K562 (cell line): ENCODE measurements at regions of chr7 and their contacts with region 1.

Region 1: GRCh38 chr7:12490117-12490688 is 80.3 kb upstream of the SCIN start:
- DNase-seq: peak; percentile 27 to 42 (median 30)
- ATAC-seq: peak; percentile 77
- H3K4me3 ChIP-seq: no peak overlapping the region
- H3K27ac ChIP-seq: no peak overlapping the region
- H3K4me1 ChIP-seq: 0 out of 5 replicates have a peak, but pooled peaks cover 0 to 3% of the 10 kb centered on the region in 2 experiments
- H3K27me3 ChIP-seq: no peaks in the 10 kb centered on the region
- CTCF ChIP-seq: peak; percentile 30 to 73 (median 57); a peak in 4 of 6 replicates
- EP300 ChIP-seq: no peak
- POLR2A ChIP-seq: no peak
- RAD21 ChIP-seq: peak; percentile 80 to 90

Region 2: DNA sequence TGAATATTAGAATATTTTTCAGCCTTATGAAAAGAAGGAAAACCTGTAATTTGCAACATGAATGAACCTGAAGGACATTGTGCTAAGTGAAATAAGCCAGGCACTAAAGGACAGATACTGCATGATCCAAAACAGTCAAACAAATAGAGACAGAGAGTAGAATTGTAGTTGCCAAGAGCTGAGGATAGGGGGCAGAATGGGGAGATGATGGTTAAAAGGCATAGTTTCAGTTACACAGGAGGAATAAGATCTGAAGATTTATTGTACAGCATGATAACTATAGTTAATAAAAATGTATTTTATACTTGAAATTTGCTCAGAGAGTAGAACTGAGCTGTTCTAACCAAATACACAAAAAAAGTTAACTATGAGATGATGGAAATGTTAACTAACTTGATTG is 428.1 kb before region 1 on chr7:
- CTCF ChIA-PET with region 1: no interaction called
- POLR2A ChIA-PET with region 1: no interaction called
- in situ Hi-C with region 1: loop called (anchors 5 kb)
- intact Hi-C with region 1: no loop called
- DNase-seq: peak in 2 of 4 experiments; percentile 3 to 5
- ATAC-seq: peak; percentile 51; the same call in 1 of the 3 replicates
- H3K4me3 ChIP-seq: no peak overlapping the region
- H3K27ac ChIP-seq: no peak overlapping the region
- H3K4me1 ChIP-seq: no peaks in the 10 kb centered on the region
- H3K27me3 ChIP-seq: no peaks in the 10 kb centered on the region
- CTCF ChIP-seq: peak in 2 of 3 experiments; percentile 12 to 34; a peak in 2 of 6 replicates
- EP300 ChIP-seq: no peak
- POLR2A ChIP-seq: no peak
- RAD21 ChIP-seq: no peak; a peak in 1 of 4 replicates

Region 3: DNA sequence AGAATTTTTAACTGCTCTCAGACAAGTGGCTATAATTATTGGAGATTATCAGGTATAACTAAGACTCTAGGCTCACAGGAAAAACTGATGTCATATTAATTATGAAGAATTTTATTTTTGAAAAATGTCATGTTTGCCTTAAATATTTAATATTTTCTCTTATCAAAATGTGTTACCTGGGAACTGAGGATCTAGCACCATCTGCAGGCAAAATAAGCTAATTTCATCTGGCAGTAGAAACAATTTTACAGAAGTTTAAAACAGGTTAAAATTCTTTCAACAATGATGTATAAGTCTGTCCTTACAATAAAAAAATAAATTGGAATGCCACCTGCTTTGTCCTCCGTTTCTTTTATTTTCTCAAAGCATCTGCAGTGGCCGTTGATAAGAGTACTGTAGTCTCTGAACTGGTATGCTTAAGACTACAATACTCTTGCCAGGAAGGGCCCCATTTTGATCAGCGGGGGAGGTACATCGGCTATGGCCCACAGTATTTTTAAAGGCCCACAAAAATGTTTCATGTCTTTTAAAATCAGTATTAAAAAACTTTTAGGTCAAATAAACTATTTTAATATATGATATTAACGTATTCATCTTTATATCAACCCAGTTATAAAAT is 167.8 kb before region 1 on chr7:
- CTCF ChIA-PET with region 1: no interaction called
- POLR2A ChIA-PET with region 1: interaction called, 3 read pairs
- in situ Hi-C with region 1: no loop called
- intact Hi-C with region 1: loop called (anchors 5 kb)
- DNase-seq: peak in 2 of 4 experiments; percentile 12 to 22
- ATAC-seq: peak; percentile 56
- H3K4me3 ChIP-seq: no peak overlapping the region
- H3K27ac ChIP-seq: no peak overlapping the region
- H3K4me1 ChIP-seq: peaks cover 0 to 5% of the 10 kb centered on the region in 2 experiments; a peak in 1 of 5 replicates
- H3K27me3 ChIP-seq: no peaks in the 10 kb centered on the region
- CTCF ChIP-seq: peak; percentile 32 to 61 (median 34); a peak in 4 of 6 replicates
- EP300 ChIP-seq: no peak
- POLR2A ChIP-seq: no peak
- RAD21 ChIP-seq: peak; percentile 65 to 75

Region 4: DNA sequence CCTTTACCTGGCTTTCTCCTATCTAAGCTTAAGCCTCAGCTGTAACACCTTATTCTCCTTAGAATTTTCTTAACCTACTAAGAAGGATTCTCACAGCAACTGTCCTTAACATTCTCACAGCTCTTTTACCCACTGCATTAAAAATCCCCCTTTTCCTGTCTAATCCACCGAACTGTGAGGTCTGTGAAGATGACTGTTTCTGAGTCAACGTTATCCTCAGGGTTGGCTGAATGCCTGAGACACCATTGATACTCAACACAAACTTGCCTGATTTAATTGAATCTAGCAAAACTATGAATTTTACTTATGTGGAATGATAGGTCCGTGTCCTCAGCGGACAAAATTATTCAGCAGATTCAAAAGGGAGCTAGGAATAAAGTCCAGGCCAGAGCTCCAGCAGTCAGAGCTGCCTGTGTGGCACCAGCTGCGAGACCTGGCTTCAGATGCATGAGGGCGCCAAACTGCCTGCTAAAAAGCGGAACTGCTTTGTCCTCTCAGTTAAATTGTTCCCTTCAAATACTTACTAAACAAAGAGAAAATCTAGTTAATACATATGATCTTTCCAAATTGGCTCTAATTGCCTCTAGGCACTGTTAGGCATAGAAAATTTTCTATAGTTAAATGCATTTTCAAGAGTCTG is 53.2 kb before region 1 on chr7:
- CTCF ChIA-PET with region 1: no interaction called
- POLR2A ChIA-PET with region 1: no interaction called
- in situ Hi-C with region 1: no loop called
- intact Hi-C with region 1: loop called (anchors 1 kb)
- DNase-seq: peak in 2 of 4 experiments; percentile 19 to 59
- ATAC-seq: peak; percentile 92
- H3K4me3 ChIP-seq: no peak overlapping the region
- H3K27ac ChIP-seq: no peak overlapping the region
- H3K4me1 ChIP-seq: peaks cover 0 to 3% of the 10 kb centered on the region in 2 experiments; a peak in 2 of 5 replicates
- H3K27me3 ChIP-seq: no peaks in the 10 kb centered on the region
- CTCF ChIP-seq: peak; percentile 54 to 63 (median 58)
- EP300 ChIP-seq: no peak
- POLR2A ChIP-seq: no peak
- RAD21 ChIP-seq: peak in 1 of 2 experiments; percentile 55; a peak in 2 of 4 replicates